Gastrocnemius medialis (tissue), 4 donors: ENCODE measurements at regions of chr5 and their contacts with region 1.

Region 1: DNA sequence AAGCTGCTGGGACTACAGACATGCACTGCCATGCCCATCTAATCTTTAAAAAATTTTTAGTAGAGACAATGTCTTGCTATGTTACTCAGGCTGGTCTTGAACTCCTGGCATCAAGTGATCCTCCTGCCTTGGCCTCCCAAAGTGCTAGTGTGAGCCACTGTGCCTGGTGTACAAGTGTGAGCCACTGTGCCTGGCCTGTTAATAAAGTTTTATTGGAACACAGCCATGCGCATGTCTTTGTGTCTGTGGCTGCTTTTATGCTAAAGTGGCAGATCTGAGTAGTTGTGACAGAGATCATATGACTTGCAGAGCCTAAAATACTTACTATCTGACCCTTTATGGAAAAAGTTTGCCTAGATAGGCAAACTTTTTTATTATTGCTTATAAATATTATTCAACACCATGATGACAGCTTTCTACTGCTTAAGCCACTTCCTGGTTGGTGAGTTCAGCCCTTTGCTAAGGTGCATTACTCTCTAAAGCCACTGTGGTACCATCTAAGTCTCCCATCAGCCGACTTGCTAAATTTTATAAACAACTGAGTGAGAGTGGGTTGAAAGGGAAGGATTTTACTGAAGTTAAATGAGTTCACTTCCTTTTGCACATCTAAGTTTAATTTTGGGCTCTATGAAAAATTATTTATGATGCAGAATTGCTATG is 133.5 kb downstream of the RASGRF2 start:
- DNase-seq: no peak
- ATAC-seq: no peak
- H3K4me3 ChIP-seq: no peak overlapping the region
- H3K27ac ChIP-seq: no peak overlapping the region
- H3K4me1 ChIP-seq: no peaks in the 10 kb centered on the region
- H3K27me3 ChIP-seq: no peaks in the 10 kb centered on the region
- CTCF ChIP-seq: no peak
- POLR2A ChIP-seq: no peak

Region 2: DNA sequence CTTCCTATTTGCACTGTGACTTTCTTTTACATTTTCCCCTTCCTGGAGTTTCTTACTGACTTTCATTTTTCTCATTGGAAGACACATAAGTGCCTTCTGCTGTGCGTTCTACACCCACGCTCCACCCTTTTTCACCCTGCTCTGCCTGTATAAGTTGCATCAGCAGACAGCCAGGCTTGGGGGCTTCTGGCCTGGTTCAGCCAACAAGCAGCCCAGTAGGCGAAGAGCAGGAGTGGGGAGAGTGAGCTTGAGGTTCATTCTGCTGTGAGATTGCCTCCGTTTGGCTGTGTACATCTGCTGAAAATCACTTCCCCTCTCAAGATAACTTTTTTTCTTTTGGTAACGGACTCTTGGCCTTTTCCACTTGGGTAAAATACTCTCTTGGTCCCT is 95.1 kb before region 1 on chr5:
- in situ Hi-C with region 1: no loop called
- intact Hi-C with region 1: no loop called
- DNase-seq: no peak
- ATAC-seq: no peak
- H3K4me3 ChIP-seq: no peak overlapping the region
- H3K27ac ChIP-seq: peak overlapping the region in 2 of 4 donors; percentile 14 to 22
- H3K4me1 ChIP-seq: no peaks in the 10 kb centered on the region
- H3K27me3 ChIP-seq: no peaks in the 10 kb centered on the region
- CTCF ChIP-seq: no peak
- POLR2A ChIP-seq: no peak

Region 3: GRCh38 chr5:81115261-81115660 is 21.6 kb after region 1 on chr5:
- in situ Hi-C with region 1: no loop called
- intact Hi-C with region 1: loop called (anchors 1 kb)
- DNase-seq: no peak
- ATAC-seq: no peak
- H3K4me3 ChIP-seq: no peak overlapping the region
- H3K27ac ChIP-seq: no peak overlapping the region
- H3K4me1 ChIP-seq: no peaks in the 10 kb centered on the region
- H3K27me3 ChIP-seq: no peaks in the 10 kb centered on the region
- CTCF ChIP-seq: no peak
- POLR2A ChIP-seq: no peak